GM10248 (cell line): ENCODE measurements at regions of chr17 and their contacts with region 1.

Region 1: GRCh38 chr17:43694077-43694870 is 32.6 kb upstream of the MEOX1 start:
- DNase-seq: peak; percentile 80
- CTCF ChIP-seq: peak; percentile 97

Region 2: GRCh38 chr17:43683928-43684653 is 10.2 kb before region 1 on chr17:
- CTCF ChIA-PET with region 1: interaction called, 15 read pairs
- POLR2A ChIA-PET with region 1: no interaction called
- DNase-seq: no peak
- CTCF ChIP-seq: no peak

Region 3: GRCh38 chr17:43713494-43714162 is 19.4 kb after region 1 on chr17:
- CTCF ChIA-PET with region 1: interaction called, 15 read pairs
- POLR2A ChIA-PET with region 1: no interaction called
- DNase-seq: peak; percentile 56
- CTCF ChIP-seq: no peak

Region 4: GRCh38 chr17:43760254-43760852 is 66.1 kb after region 1 on chr17:
- CTCF ChIA-PET with region 1: interaction called, 503 read pairs
- POLR2A ChIA-PET with region 1: no interaction called
- DNase-seq: peak; percentile 90
- CTCF ChIP-seq: peak; percentile 100

Region 5: GRCh38 chr17:43766413-43767052 is 72.3 kb after region 1 on chr17:
- CTCF ChIA-PET with region 1: interaction called, 503 read pairs
- POLR2A ChIA-PET with region 1: no interaction called
- DNase-seq: no peak
- CTCF ChIP-seq: peak; percentile 75

Region 6: GRCh38 chr17:43846221-43846712 is 152.0 kb after region 1 on chr17:
- CTCF ChIA-PET with region 1: interaction called, 11 read pairs
- POLR2A ChIA-PET with region 1: no interaction called
- DNase-seq: peak; percentile 89
- CTCF ChIP-seq: peak; percentile 97